Mammary epithelial cell (primary cell): ENCODE measurements at regions of chr5 and their contacts with region 1.

Region 1: GRCh38 chr5:53323943-53324642 is 156.3 kb upstream of the FST start:
- DNase-seq: peak; percentile 99
- H3K4me3 ChIP-seq: no peak overlapping the region
- H3K27ac ChIP-seq: peak overlapping the region; percentile 99
- H3K4me1 ChIP-seq: peaks cover 78% of the 10 kb centered on the region
- H3K27me3 ChIP-seq: no peaks in the 10 kb centered on the region
- CTCF ChIP-seq: no peak

Region 2: DNA sequence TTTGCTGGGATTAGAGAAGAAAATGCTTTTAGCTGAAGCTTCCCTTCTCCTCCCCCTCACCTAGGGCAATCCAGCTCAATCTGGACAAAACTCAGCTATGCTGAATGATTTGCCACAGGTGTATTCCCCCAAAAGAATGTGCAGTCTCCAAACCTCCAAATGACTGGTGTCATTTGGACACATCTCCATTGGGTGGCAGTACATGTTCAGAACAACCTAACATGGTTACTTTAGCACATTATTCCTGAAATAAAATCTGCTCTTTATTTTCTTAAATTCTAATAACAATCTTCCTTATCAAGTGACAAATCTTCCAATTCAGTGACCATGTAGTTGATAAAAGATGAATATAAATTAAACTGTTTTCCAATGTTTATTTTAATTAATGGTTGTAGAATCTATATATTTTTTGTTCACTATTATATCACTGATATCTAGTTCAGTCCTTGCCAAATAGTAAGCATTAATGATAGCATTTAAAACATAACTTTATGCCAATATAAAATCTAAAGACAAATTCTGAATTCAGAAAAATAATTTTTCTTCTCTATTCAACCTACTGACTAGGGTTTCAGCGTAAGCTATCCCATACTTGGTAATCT is 153.2 kb before region 1 on chr5:
- CTCF ChIA-PET with region 1: no interaction called
- dilution Hi-C with region 1: no loop called
- in situ Hi-C with region 1: no loop called
- intact Hi-C with region 1: loop called (anchors 2 kb)
- DNase-seq: peak; percentile 52
- H3K4me3 ChIP-seq: no peak overlapping the region
- H3K27ac ChIP-seq: peak overlapping the region; percentile 51
- H3K4me1 ChIP-seq: no peaks in the 10 kb centered on the region
- H3K27me3 ChIP-seq: no peaks in the 10 kb centered on the region
- CTCF ChIP-seq: peak; percentile 77 to 78

Region 3: DNA sequence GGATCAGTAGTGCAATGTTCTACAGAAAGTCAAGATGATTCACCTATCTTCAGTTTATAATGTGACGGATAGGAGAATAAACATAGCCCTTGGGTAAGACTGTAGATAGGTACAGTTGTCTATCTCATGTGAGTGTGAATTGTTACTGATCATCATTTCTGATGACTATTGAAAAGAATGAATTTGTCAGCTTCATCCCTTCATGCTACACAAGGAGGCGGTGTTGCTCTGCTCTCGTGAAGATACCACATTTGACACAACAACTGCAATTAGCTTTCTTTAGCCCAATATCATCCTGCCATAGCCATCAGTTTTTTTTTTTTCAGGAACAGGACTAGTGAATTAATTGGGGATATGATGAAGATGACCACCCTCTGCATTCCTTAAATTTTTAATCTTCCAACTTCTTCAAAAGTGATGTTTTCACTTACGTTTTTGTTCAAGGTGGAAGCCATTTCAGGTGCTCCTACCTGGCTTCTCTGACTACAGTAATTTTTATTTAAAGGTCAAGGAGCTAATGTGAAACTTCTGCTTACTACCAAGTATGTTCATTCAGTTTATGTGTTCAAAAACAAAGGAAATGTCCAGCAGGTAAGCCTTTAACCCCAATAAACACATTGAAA is 61.6 kb before region 1 on chr5:
- CTCF ChIA-PET with region 1: interaction called, 7 read pairs
- dilution Hi-C with region 1: no loop called
- in situ Hi-C with region 1: no loop called
- intact Hi-C with region 1: loop called (anchors 2 kb)
- DNase-seq: peak; percentile 60
- H3K4me3 ChIP-seq: no peak overlapping the region
- H3K27ac ChIP-seq: peak overlapping the region; percentile 48
- H3K4me1 ChIP-seq: peaks cover 44% of the 10 kb centered on the region
- H3K27me3 ChIP-seq: no peaks in the 10 kb centered on the region
- CTCF ChIP-seq: peak; percentile 63 to 68

Region 4: GRCh38 chr5:53291047-53291927 is 32.8 kb before region 1 on chr5:
- CTCF ChIA-PET with region 1: no interaction called
- dilution Hi-C with region 1: no loop called
- in situ Hi-C with region 1: no loop called
- intact Hi-C with region 1: loop called (anchors 2 kb)
- DNase-seq: peak; percentile 60
- H3K4me3 ChIP-seq: no peak overlapping the region
- H3K27ac ChIP-seq: peak overlapping the region; percentile 39
- H3K4me1 ChIP-seq: peaks cover 31% of the 10 kb centered on the region
- H3K27me3 ChIP-seq: no peaks in the 10 kb centered on the region
- CTCF ChIP-seq: no peak

Region 5: GRCh38 chr5:53303105-53303504 is 21.0 kb before region 1 on chr5:
- CTCF ChIA-PET with region 1: no interaction called
- dilution Hi-C with region 1: no loop called
- in situ Hi-C with region 1: no loop called
- intact Hi-C with region 1: loop called (anchors 1 kb)
- DNase-seq: peak; percentile 94
- H3K4me3 ChIP-seq: no peak overlapping the region
- H3K27ac ChIP-seq: peak overlapping the region; percentile 93
- H3K4me1 ChIP-seq: peaks cover 18% of the 10 kb centered on the region
- H3K27me3 ChIP-seq: no peaks in the 10 kb centered on the region
- CTCF ChIP-seq: no peak

Region 6: GRCh38 chr5:53418844-53419646 is 95.0 kb after region 1 on chr5:
- CTCF ChIA-PET with region 1: no interaction called
- dilution Hi-C with region 1: no loop called
- in situ Hi-C with region 1: loop called in 1 of 2 experiments (anchors 10 kb)
- intact Hi-C with region 1: loop called (anchors 1 kb)
- DNase-seq: peak; percentile 96
- H3K4me3 ChIP-seq: no peak overlapping the region
- H3K27ac ChIP-seq: peak overlapping the region; percentile 100
- H3K4me1 ChIP-seq: peaks cover 47% of the 10 kb centered on the region
- H3K27me3 ChIP-seq: no peaks in the 10 kb centered on the region
- CTCF ChIP-seq: no peak

Region 7: DNA sequence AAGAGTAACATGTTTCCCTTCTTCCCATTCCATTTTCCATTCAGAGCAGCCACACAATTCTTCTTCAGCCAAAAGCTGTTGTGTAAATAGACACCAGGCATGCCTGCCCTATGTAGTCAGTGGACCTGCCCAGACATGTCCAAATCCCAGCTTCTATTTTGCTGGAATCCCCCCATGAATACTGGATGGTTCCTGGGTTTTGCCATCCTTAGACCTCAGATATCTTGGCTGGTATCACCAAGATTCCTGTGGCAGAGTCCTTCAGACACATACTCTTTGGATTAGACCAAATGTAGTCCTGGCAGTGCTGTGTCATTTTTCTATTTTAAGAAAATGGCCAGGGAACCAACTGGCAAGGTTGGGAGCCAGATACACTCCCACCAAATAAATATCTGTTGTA is 166.7 kb after region 1 on chr5:
- CTCF ChIA-PET with region 1: no interaction called
- dilution Hi-C with region 1: no loop called
- in situ Hi-C with region 1: no loop called
- intact Hi-C with region 1: no loop called
- DNase-seq: peak; percentile 93
- H3K4me3 ChIP-seq: peak overlapping the region in 1 of 3 experiments; percentile 44
- H3K27ac ChIP-seq: peak overlapping the region; percentile 79
- H3K4me1 ChIP-seq: peaks cover 27% of the 10 kb centered on the region
- H3K27me3 ChIP-seq: no peaks in the 10 kb centered on the region
- CTCF ChIP-seq: no peak